ENCODE measurements at regions of chr6 and their contacts with region 1.

Region 1: DNA sequence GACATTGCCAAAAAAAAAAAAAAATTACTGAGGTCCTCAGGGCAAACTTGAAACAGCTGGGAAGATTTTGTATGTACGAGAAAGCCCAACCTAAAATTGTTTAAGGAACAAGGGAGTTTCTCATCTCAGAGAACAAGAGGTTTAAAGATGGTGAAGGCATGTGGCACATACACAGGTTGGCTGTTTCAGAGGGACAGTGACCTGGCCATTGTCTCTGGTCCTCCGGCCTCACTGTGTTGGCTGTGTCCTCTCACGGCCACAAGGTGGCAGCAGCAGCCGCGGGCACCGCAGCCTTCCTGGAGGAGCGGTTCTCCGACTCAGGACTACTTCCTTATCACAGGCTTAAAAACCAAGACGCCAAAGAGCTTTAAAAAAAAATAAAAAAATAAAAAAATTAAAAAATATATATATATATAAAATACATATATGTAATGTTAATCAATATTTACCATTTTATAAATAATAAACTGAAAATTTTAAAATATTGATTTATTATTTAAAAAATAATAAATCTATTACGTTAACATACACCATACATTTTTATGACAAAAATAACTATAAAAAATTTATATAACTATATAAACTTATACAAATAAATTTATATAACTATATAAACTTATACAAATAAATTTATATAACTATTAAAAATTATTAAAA is 52.8 kb downstream of the GTF2H5 start:
- DNase-seq: no peak
- H3K4me3 ChIP-seq: no peak overlapping the region
- H3K27ac ChIP-seq: no peak overlapping the region
- H3K27me3 ChIP-seq: no peaks in the 10 kb centered on the region
- CTCF ChIP-seq: peak; percentile 92

Region 2: DNA sequence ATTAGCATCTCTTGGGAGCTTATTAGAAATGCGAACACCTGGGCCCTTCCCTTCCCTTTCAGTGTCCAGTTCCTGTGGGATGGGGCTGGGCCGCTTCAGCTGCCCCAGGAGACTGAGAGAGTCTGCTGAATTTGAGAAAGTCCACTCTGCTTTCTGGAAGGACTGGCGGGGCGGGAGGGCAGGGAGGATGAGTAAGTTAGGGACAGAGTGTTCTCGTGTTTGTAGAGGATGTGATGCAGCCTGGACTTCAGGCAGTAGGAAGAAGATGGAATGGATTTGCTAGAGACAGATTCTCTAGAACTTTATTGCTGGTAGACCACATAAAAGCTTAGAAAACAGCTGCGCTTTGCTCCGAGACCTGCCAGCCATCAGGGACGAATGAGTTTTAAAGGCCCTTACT is 90.3 kb after region 1 on chr6:
- CTCF ChIA-PET with region 1: no interaction called
- POLR2A ChIA-PET with region 1: no interaction called
- DNase-seq: no peak
- H3K4me3 ChIP-seq: no peak overlapping the region
- H3K27ac ChIP-seq: no peak overlapping the region
- H3K27me3 ChIP-seq: no peaks in the 10 kb centered on the region
- CTCF ChIP-seq: no peak

Region 3: DNA sequence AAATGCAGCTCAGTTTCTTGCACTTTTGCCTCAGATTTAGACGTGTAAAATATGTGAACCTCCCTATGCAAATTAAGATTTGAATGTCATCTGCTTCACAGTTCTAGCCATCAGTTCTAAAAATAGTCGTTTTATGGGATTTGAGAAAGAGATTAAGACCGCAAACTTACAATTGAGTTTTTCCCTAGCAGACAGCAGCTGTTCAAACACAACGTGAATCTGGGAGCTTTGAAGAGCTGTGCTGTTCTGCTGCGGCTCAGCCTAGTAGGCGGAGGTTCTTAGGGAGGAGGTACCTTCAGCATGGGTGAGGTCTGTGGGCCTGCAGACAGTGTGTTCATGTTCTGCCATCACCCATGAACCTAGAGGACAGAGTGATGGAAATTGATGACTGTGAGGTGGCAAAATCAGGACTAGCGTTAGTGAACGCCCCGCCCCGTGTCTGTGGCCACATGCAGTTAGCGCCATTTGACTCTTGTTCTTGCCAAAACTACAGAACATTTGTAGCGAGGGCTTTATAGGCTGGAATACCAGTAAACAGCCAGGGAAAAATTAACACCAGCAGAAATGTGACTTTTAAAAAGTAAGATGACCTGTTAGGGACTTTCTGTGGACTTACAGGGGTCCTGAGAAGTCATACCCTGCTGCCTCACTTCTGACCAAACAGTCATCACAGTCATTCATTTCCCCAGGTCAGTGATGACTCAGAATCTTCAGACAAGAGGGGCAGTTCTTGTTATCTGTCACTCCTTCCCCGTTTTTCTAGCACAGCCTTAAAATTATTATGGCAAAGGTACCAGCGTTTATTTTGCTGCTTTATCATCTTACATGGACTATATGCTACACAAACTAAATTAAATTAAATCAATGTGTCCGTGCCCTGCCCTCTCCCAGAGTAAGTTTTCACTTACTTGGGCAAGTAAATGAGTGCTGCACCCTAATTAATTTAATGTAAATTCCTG is 254.7 kb after region 1 on chr6:
- CTCF ChIA-PET with region 1: interaction called, 10 read pairs
- POLR2A ChIA-PET with region 1: interaction called, 4 read pairs
- DNase-seq: no peak
- H3K4me3 ChIP-seq: no peak overlapping the region
- H3K27ac ChIP-seq: peak overlapping the region; percentile 81
- H3K27me3 ChIP-seq: no peaks in the 10 kb centered on the region
- CTCF ChIP-seq: no peak

Region 4: DNA sequence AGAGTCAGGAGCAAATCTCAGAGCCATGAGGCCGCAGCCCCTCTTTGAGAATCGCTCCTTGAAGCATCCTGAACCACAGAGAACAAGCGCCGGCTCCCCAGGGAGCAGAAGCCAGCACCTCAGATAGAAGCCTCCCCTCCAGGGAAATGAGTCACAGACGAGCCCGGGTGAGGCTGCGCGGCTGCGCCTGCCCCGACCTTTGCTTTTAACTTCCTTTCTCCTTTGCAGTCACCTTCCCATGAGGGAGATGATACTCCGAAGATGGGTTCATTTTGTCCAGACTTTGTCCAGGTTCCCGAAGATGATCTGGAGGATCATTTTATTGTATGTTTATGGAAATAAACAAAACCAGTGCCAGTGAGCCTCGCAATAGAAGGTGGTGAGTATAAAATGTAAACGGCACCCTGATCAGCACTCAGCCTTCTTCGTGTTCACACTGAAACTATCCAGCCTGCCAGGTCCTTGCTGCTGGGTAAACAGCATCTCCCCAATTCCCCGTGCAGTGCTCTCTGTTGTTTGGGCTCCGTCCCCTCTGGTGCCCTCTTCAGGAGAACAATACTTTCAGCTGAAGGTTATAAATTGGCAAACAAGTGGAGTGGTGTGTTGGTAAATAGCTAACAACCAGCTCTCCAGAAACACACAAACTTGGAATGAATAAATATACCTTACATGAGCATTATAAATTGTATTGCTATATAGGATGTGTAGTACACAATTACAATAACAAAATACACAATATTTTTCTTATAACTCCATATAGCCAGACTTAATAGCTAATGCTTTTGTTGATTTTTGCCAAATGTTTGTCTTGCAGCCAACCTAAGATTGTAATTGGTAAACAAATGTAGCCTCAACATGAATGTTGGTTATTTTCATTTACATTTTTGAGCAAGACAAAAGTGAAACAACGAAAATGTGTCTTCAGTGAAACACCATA is 297.5 kb after region 1 on chr6:
- CTCF ChIA-PET with region 1: interaction called, 46 read pairs
- POLR2A ChIA-PET with region 1: interaction called, 3 read pairs
- DNase-seq: peak; percentile 43
- H3K4me3 ChIP-seq: peak overlapping the region; percentile 54
- H3K27ac ChIP-seq: peak overlapping the region; percentile 58
- H3K27me3 ChIP-seq: no peaks in the 10 kb centered on the region
- CTCF ChIP-seq: peak; percentile 72

Region 5: GRCh38 chr6:158571826-158572652 is 351.1 kb after region 1 on chr6:
- CTCF ChIA-PET with region 1: interaction called, 16 read pairs
- POLR2A ChIA-PET with region 1: no interaction called
- DNase-seq: no peak
- H3K4me3 ChIP-seq: no peak overlapping the region
- H3K27ac ChIP-seq: no peak overlapping the region
- H3K27me3 ChIP-seq: no peaks in the 10 kb centered on the region
- CTCF ChIP-seq: no peak

Region 6: GRCh38 chr6:158611541-158612370 is 390.8 kb after region 1 on chr6:
- CTCF ChIA-PET with region 1: interaction called, 111 read pairs
- POLR2A ChIA-PET with region 1: no interaction called
- DNase-seq: no peak
- H3K4me3 ChIP-seq: no peak overlapping the region
- H3K27ac ChIP-seq: no peak overlapping the region
- H3K27me3 ChIP-seq: no peaks in the 10 kb centered on the region
- CTCF ChIP-seq: no peak

Measured in AG04450 (cell line).